ENCODE measurements at regions of chr20 and their contacts with region 1.

Region 1: DNA sequence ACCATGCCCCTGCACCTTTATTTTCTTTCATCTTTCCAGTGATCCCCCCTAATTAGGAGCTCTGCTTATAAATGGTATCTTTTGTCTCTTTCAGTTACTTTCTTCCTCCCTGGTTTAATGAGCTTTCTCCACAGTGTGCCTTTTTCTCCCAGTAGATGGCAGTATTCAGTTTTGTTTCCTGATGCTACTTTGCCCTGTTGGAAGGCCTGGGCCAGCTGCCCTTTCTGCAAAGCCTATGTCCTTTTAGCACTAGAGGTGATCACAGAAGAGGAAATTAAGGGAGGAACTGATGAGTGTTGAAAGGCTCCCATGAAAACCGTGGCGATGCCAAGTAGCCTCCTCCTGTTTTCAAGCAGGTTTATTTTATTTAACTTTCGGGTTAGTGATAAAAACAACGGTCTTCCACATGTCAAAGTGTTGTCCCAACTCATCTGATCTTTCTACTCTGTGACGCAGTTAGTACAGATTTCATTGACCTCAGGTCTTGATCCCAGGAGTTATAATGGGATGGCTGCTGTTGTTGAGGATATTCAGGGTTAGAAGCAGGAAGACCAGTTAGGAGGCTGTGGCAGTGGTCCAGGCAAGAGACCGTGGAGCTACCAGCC is 184.2 kb upstream of the BMP2 start:
- DNase-seq: peak; percentile 78
- H3K4me3 ChIP-seq: no peak overlapping the region
- H3K27ac ChIP-seq: peak overlapping the region; percentile 24
- H3K4me1 ChIP-seq: peaks cover 15% of the 10 kb centered on the region
- H3K27me3 ChIP-seq: no peaks in the 10 kb centered on the region
- CTCF ChIP-seq: peak; percentile 56 to 61
- POLR2A ChIP-seq: no peak

Region 2: DNA sequence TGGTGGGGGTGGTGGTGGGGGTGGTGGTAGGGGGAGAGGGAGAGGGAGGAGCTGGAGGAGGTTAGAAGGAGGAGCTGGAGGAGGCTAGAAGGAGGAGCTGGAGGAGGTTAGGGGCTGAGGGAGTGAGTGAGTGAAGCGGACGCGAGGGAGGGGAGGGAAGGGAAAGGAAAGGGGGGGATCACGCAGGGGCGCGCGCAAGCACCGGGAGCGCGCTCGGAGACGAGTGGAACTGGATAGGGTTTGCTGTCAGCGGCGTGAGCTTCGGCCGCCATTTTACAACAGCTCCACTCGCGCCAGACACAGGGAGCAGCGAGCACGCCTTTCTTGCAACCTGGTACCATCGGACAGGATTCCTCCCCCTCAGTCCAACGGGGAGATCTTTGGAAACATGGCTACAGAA is 369.9 kb before region 1 on chr20:
- CTCF ChIA-PET with region 1: no interaction called
- POLR2A ChIA-PET with region 1: no interaction called
- dilution Hi-C with region 1: no loop called
- intact Hi-C with region 1: no loop called
- DNase-seq: no peak
- H3K4me3 ChIP-seq: no peak overlapping the region
- H3K27ac ChIP-seq: no peak overlapping the region
- H3K4me1 ChIP-seq: no peaks in the 10 kb centered on the region
- H3K27me3 ChIP-seq: no peaks in the 10 kb centered on the region
- CTCF ChIP-seq: no peak
- POLR2A ChIP-seq: no peak

Region 3: GRCh38 chr20:6265204-6265904 is 317.9 kb before region 1 on chr20:
- CTCF ChIA-PET with region 1: interaction called, 10 read pairs
- POLR2A ChIA-PET with region 1: no interaction called
- dilution Hi-C with region 1: no loop called
- intact Hi-C with region 1: loop called (anchors 2 kb)
- DNase-seq: peak; percentile 82
- H3K4me3 ChIP-seq: peak overlapping the region in 1 of 3 experiments; percentile 59
- H3K27ac ChIP-seq: peak overlapping the region; percentile 18
- H3K4me1 ChIP-seq: peaks cover 10% of the 10 kb centered on the region
- H3K27me3 ChIP-seq: peaks cover 0 to 4% of the 10 kb centered on the region in 2 experiments
- CTCF ChIP-seq: peak; percentile 11 to 29
- POLR2A ChIP-seq: no peak

Region 4: GRCh38 chr20:6562111-6562510 is 21.1 kb before region 1 on chr20:
- CTCF ChIA-PET with region 1: interaction called, 14 read pairs
- POLR2A ChIA-PET with region 1: no interaction called
- dilution Hi-C with region 1: no loop called
- intact Hi-C with region 1: no loop called
- DNase-seq: peak; percentile 99
- H3K4me3 ChIP-seq: no peak overlapping the region
- H3K27ac ChIP-seq: peak overlapping the region; percentile 82
- H3K4me1 ChIP-seq: peaks cover 24% of the 10 kb centered on the region
- H3K27me3 ChIP-seq: no peaks in the 10 kb centered on the region
- CTCF ChIP-seq: no peak
- POLR2A ChIP-seq: no peak

Region 5: GRCh38 chr20:6636209-6637159 is 53.2 kb after region 1 on chr20:
- CTCF ChIA-PET with region 1: interaction called, 17 read pairs
- POLR2A ChIA-PET with region 1: no interaction called
- dilution Hi-C with region 1: no loop called
- intact Hi-C with region 1: loop called (anchors 1 kb)
- DNase-seq: peak; percentile 85
- H3K4me3 ChIP-seq: no peak overlapping the region
- H3K27ac ChIP-seq: no peak overlapping the region
- H3K4me1 ChIP-seq: no peaks in the 10 kb centered on the region
- H3K27me3 ChIP-seq: no peaks in the 10 kb centered on the region
- CTCF ChIP-seq: peak; percentile 52 to 62
- POLR2A ChIP-seq: no peak

Region 6: GRCh38 chr20:6819605-6820004 is 236.4 kb after region 1 on chr20:
- CTCF ChIA-PET with region 1: interaction called, 14 read pairs
- POLR2A ChIA-PET with region 1: no interaction called
- dilution Hi-C with region 1: no loop called
- intact Hi-C with region 1: loop called (anchors 1 kb)
- DNase-seq: peak; percentile 46
- H3K4me3 ChIP-seq: no peak overlapping the region
- H3K27ac ChIP-seq: no peak overlapping the region
- H3K4me1 ChIP-seq: no peaks in the 10 kb centered on the region
- H3K27me3 ChIP-seq: peaks cover 0 to 2% of the 10 kb centered on the region in 2 experiments
- CTCF ChIP-seq: peak; percentile 16 to 27
- POLR2A ChIP-seq: no peak

Measured in endothelial cell of umbilical vein (primary cell).